Heart right ventricle (tissue), 16 donors: ENCODE measurements at regions of chrX and their contacts with region 1.

Region 1: GRCh38 chrX:21745756-21746155 is 12.2 kb downstream of the SMPX start:
- DNase-seq: peak in 1 of 2 donors; percentile 11
- ATAC-seq: no peak
- H3K4me3 ChIP-seq: no peak overlapping the region
- H3K27ac ChIP-seq: no peak overlapping the region
- H3K4me1 ChIP-seq: peaks cover 0 to 51% (median 4%) of the 10 kb centered on the region in 9 donors
- H3K27me3 ChIP-seq: peaks cover 0 to 31% (median 0%) of the 10 kb centered on the region in 7 donors
- CTCF ChIP-seq: peak; percentile 15 to 63 (median 47)

Region 2: DNA sequence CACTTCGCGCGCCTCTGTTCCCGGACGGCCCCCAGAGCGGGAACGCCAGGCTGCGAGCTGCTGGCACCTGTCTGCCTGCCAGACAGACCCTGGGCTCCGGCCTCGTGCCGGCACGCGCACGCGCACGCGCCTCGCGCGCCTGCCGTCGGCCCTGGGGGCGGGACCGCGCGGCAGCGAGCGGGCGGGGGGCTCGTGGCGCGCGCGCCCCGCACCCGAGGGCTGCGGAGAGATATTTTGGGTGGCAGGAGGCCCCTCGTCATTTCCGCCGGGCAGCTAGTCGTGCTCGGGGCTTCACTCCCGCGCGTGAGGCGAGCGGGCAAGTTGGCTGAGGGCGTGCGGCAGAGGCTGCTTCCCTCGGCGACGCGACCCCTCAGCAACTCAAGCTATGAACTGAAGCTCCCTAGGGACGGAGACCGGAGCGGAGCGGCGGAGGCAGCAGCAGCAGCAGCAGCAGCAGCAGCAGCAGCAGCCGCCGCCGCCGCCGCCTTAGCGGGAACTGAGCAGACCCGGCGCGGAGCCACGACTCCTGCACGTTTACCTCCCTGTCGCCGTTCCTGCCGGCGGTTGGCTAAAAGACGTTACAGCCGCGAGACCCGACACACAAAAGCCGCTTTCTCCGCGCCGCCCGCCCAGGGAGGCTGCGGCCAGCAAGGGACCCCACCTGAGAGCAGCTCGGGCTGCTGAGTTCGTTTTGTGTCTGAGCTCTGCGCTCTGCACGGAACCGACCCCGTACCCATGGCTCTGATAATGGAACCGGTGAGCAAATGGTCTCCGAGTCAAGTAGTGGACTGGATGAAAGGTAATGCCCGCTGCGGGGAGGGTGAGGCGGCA is 371.4 kb before region 1 on chrX and contains the start of gene CNKSR2:
- intact Hi-C with region 1: no loop called
- DNase-seq: peak in 1 of 2 donors; percentile 12
- ATAC-seq: peak in 6 of 8 donors; percentile 21 to 74 (median 41)
- H3K4me3 ChIP-seq: peak within 1 kb of the TSS in 9 of 10 donors; percentile 31 to 60 (median 54)
- H3K27ac ChIP-seq: peak within 1 kb of the TSS in 2 of 10 donors; percentile 7 to 26
- H3K4me1 ChIP-seq: peaks cover 0 to 11% (median 0%) of the 10 kb centered on the region in 9 donors
- H3K27me3 ChIP-seq: peaks cover 0 to 56% (median 13%) of the 10 kb centered on the region in 7 donors
- CTCF ChIP-seq: no peak
- total RNA-seq, gene CNKSR2: 0.25 to 1.6 (median 0.50) TPM

Region 3: DNA sequence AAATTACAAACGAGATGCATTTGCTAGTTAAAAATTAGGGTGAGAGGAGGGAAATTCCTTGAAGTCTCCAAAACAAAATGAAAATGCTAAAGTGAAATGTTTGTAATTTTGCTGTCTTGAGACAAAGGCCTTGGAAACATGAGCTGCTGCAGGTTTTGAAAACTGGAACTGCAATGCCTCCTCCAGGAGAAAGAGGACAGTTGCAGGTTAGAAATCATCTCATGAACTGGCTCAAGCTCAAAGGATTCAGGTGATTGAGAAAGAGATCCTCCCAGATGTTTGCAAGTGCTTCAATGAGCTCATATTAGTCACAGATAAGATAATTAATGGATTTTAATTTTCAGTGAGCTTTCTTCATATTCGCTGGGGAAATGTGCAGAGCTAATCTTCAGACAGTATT is 20.3 kb before region 1 on chrX:
- intact Hi-C with region 1: loop called in 1 of 10 experiments (anchors 2 kb)
- DNase-seq: no peak
- ATAC-seq: no peak
- H3K4me3 ChIP-seq: no peak overlapping the region
- H3K27ac ChIP-seq: peak overlapping the region in 1 of 10 donors; percentile 39
- H3K4me1 ChIP-seq: peaks cover 0 to 24% (median 3%) of the 10 kb centered on the region in 9 donors
- H3K27me3 ChIP-seq: peaks cover 0 to 9% (median 0%) of the 10 kb centered on the region in 7 donors
- CTCF ChIP-seq: peak in 5 of 9 donors; percentile 14 to 31 (median 26)

Region 4: GRCh38 chrX:22037911-22038537 is 292.3 kb after region 1 on chrX:
- intact Hi-C with region 1: no loop called
- DNase-seq: no peak
- ATAC-seq: no peak
- H3K4me3 ChIP-seq: no peak overlapping the region
- H3K27ac ChIP-seq: no peak overlapping the region
- H3K4me1 ChIP-seq: no peaks in the 10 kb centered on the region
- H3K27me3 ChIP-seq: peaks cover 0 to 4% (median 0%) of the 10 kb centered on the region in 7 donors
- CTCF ChIP-seq: no peak